CD8-positive, alpha-beta T cell (primary cell): ENCODE measurements at regions of chr2 and their contacts with region 1.

Region 1: GRCh38 chr2:117814417-117815264 is at the start of gene DDX18:
- DNase-seq: peak; percentile 95 to 100 (median 97)
- ATAC-seq: peak; percentile 84
- H3K4me3 ChIP-seq: peak within 1 kb of the TSS; percentile 58 to 77
- H3K4me3 Mint-ChIP-seq: peak within 1 kb of the TSS; percentile 88
- H3K27ac ChIP-seq: peak within 1 kb of the TSS; percentile 90 to 97
- H3K27ac Mint-ChIP-seq: peak within 1 kb of the TSS; percentile 98
- H3K4me1 ChIP-seq: peaks cover 30% of the 10 kb centered on the region
- H3K4me1 Mint-ChIP-seq: peaks cover 40% of the 10 kb centered on the region
- H3K27me3 ChIP-seq: no peaks in the 10 kb centered on the region
- H3K27me3 Mint-ChIP-seq: no peaks in the 10 kb centered on the region
- CTCF ChIP-seq: peak; percentile 98
- total RNA-seq, gene DDX18: 124 to 129 TPM

Region 2: DNA sequence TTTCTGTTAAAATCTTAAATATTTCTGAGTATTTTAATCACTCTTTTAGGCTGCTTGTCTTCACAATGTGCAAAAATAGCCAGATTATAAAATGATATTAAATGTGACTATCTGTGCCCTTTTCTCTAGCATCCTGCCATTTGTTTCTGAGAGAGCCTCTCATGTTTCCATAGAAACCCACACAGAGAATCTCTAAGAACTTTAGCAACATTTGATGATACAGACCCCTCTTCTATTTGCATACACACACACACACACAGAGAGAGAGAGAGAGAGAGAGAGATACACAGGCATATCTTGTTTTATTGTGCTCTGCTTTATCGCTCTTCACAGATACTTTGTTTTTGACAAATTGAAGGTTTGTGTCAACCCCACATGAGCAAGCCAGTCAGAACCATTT is 134.7 kb before region 1 on chr2:
- CTCF ChIA-PET with region 1: no interaction called
- POLR2A ChIA-PET with region 1: no interaction called
- intact Hi-C with region 1: no loop called
- DNase-seq: no peak
- ATAC-seq: no peak
- H3K4me3 ChIP-seq: no peak overlapping the region
- H3K4me3 Mint-ChIP-seq: no peak overlapping the region
- H3K27ac ChIP-seq: no peak overlapping the region
- H3K27ac Mint-ChIP-seq: no peak overlapping the region
- H3K4me1 ChIP-seq: no peaks in the 10 kb centered on the region
- H3K4me1 Mint-ChIP-seq: no peaks in the 10 kb centered on the region
- H3K27me3 ChIP-seq: no peaks in the 10 kb centered on the region
- H3K27me3 Mint-ChIP-seq: no peaks in the 10 kb centered on the region
- CTCF ChIP-seq: no peak

Region 3: DNA sequence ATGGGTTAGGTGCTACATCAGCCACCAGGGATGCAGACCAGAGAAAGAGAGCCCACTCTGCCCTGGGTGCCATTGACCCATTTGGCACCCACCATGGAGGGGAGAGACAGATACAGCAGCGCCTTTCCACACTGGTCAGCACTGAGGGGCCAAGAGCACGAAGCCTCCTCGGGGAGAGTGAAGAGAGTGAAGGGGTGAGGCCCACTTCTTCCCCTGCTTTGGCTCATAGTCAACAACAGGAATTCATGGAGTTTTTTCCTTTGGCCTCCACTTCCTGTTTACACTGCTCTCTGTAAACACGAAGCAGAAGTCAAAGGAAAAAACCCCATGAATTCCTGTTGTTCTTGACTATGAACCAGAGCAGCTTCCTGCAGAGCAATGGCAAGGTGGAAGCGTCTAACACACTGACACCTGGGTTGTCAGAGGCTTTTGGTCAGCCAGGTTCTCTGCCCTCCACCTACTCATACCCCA is 119.3 kb after region 1 on chr2:
- CTCF ChIA-PET with region 1: interaction called, 5 read pairs
- POLR2A ChIA-PET with region 1: no interaction called
- intact Hi-C with region 1: loop called in 1 of 2 experiments (anchors 5 kb)
- DNase-seq: no peak
- ATAC-seq: no peak
- H3K4me3 ChIP-seq: no peak overlapping the region
- H3K4me3 Mint-ChIP-seq: no peak overlapping the region
- H3K27ac ChIP-seq: no peak overlapping the region
- H3K27ac Mint-ChIP-seq: no peak overlapping the region
- H3K4me1 ChIP-seq: no peaks in the 10 kb centered on the region
- H3K4me1 Mint-ChIP-seq: no peaks in the 10 kb centered on the region
- H3K27me3 ChIP-seq: no peaks in the 10 kb centered on the region
- H3K27me3 Mint-ChIP-seq: no peaks in the 10 kb centered on the region
- CTCF ChIP-seq: no peak

Region 4: DNA sequence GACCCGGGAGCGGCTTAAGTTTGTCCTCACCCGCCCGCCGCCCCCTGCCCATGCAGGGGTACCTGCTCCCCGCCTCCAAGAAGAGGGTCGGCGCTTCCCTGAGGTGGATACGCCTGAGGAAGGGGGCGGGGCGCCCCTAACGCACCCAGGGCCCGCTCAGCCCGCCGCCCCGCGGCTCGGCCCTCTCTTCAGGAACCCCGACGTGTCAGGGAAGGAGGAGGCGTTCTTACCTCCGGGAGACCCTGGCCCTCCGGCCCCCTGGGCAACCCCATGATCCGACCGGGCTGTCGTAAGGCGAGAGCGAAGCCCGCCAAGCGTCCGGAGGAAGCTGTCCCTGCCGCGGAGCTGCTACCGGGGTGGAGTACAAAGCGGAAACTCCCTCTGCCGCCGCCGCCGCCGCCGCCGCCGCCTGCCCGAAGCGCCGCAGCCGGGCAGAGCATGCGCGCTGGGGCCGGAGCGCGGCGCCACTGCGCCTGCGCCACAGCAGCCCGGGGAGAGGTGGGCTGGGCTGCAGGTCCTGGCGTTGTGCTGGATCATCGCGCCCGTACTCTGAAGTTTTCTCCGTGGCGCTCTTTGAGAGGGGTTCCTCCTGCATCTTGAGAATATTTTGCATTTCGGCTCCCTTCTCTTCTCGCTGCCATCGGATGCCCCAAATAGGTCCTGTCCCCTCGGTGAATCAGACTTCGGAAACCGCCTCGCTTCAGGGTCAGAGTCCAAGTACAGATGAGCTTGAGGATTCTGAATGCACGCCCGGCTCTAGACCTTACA is 199.3 kb after region 1 on chr2 and contains the start of gene CCDC93:
- CTCF ChIA-PET with region 1: interaction called, 8 read pairs
- POLR2A ChIA-PET with region 1: no interaction called
- intact Hi-C with region 1: loop called in 1 of 2 experiments (anchors 1 kb)
- DNase-seq: peak; percentile 73 to 94 (median 86)
- ATAC-seq: peak; percentile 85
- H3K4me3 ChIP-seq: peak within 1 kb of the TSS; percentile 73 to 88
- H3K4me3 Mint-ChIP-seq: peak within 1 kb of the TSS; percentile 95
- H3K27ac ChIP-seq: peak within 1 kb of the TSS; percentile 93 to 95
- H3K27ac Mint-ChIP-seq: peak within 1 kb of the TSS; percentile 92
- H3K4me1 ChIP-seq: peaks cover 27% of the 10 kb centered on the region
- H3K4me1 Mint-ChIP-seq: peaks cover 47% of the 10 kb centered on the region
- H3K27me3 ChIP-seq: no peaks in the 10 kb centered on the region
- H3K27me3 Mint-ChIP-seq: peaks cover 3% of the 10 kb centered on the region
- CTCF ChIP-seq: no peak
- total RNA-seq, gene CCDC93: 84.4 to 85.3 TPM

Region 5: GRCh38 chr2:118186110-118186857 is 371.6 kb after region 1 on chr2:
- CTCF ChIA-PET with region 1: no interaction called
- POLR2A ChIA-PET with region 1: interaction called, 4 read pairs
- intact Hi-C with region 1: loop called (anchors 1 to 5 kb)
- DNase-seq: peak; percentile 66 to 94 (median 88)
- ATAC-seq: peak; percentile 92
- H3K4me3 ChIP-seq: peak overlapping the region; percentile 81 to 93
- H3K4me3 Mint-ChIP-seq: peak overlapping the region; percentile 94
- H3K27ac ChIP-seq: peak overlapping the region; percentile 73 to 79
- H3K27ac Mint-ChIP-seq: peak overlapping the region; percentile 94
- H3K4me1 ChIP-seq: peaks cover 9% of the 10 kb centered on the region
- H3K4me1 Mint-ChIP-seq: peaks cover 17% of the 10 kb centered on the region
- H3K27me3 ChIP-seq: no peaks in the 10 kb centered on the region
- H3K27me3 Mint-ChIP-seq: no peaks in the 10 kb centered on the region
- CTCF ChIP-seq: no peak

Region 6: DNA sequence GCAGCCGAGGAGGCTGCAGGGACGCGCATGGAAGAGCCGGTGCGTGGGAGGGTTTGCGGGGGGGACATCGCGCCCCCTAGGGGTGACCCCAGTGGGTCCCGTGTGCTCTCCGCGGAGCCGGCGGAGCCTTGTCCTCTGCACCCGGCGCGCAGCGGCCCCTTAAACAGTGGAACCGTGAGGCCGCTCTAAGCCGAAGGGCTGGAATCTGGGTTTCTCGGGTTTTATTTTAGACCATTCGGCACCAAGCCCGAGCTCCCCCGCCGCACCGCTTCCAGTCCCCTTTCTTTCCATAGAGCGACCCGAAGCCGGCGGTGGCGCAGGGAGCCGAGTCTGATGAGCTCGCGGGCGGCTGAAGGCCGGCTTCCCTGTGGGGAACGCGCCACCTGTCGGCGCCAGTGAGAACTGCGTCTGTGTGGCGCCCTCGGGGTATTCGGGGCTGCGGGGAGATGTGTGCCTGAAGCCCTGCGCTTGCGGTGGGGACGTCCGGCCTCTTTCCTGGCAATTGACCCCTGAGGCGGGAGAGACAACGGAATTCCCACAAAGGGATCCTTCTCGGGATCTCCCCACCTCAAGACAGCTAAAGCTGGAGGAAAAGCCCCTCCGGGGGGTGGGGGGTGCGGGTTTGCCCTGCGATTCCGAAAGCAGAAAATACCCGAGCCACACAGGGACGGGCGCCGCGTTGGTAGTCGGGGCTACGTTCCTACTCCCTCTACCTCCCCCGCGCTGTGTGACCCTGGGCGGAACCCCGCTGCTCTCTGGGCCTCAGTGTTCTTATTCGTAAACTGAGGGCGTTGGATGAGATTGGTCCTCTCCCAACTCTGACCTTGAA is 1041.0 kb after region 1 on chr2:
- CTCF ChIA-PET with region 1: no interaction called
- POLR2A ChIA-PET with region 1: no interaction called
- intact Hi-C with region 1: loop called in 1 of 2 experiments (anchors 10 kb)
- DNase-seq: peak; percentile 69 to 87 (median 79)
- ATAC-seq: peak; percentile 88
- H3K4me3 ChIP-seq: peak overlapping the region; percentile 23 to 53
- H3K4me3 Mint-ChIP-seq: peak overlapping the region; percentile 73
- H3K27ac ChIP-seq: no peak overlapping the region
- H3K27ac Mint-ChIP-seq: no peak overlapping the region
- H3K4me1 ChIP-seq: peaks cover 27% of the 10 kb centered on the region
- H3K4me1 Mint-ChIP-seq: peaks cover 18% of the 10 kb centered on the region
- H3K27me3 ChIP-seq: peaks cover 47 to 57% of the 10 kb centered on the region in 2 experiments
- H3K27me3 Mint-ChIP-seq: peaks cover 65% of the 10 kb centered on the region
- CTCF ChIP-seq: peak; percentile 85